ENCODE measurements at regions of chr11 and their contacts with region 1.

Region 1: GRCh38 chr11:134207538-134208239 is 16.1 kb downstream of the NCAPD3 start:
- DNase-seq: peak; percentile 60
- ATAC-seq: no peak
- H3K4me3 ChIP-seq: no peak overlapping the region
- H3K4me3 Mint-ChIP-seq: no peak overlapping the region
- H3K27ac ChIP-seq: no peak overlapping the region
- H3K27ac Mint-ChIP-seq: no peak overlapping the region
- H3K4me1 ChIP-seq: no peaks in the 10 kb centered on the region
- H3K4me1 Mint-ChIP-seq: no peaks in the 10 kb centered on the region
- H3K27me3 ChIP-seq: no peaks in the 10 kb centered on the region
- H3K27me3 Mint-ChIP-seq: no peaks in the 10 kb centered on the region
- CTCF ChIP-seq: peak; percentile 94

Region 2: DNA sequence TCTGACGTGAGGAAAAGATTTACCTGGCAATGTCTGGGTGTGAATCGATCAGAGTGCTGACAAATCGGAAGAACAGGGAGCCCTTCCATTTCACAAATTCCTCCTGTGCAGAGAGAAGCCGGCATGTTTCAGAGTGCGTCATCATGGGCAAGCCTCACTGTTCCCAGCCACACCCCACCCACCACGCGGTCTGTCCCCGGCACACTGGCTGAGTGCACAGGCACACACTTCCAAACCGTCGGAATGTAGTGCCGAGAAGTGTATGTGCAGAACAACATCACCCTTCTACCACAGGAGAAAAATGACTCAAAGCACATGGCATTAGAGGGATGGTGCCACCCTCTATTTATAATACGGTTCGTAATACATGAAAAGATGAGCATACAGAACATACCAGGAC is 31.4 kb before region 1 on chr11:
- CTCF ChIA-PET with region 1: no interaction called
- POLR2A ChIA-PET with region 1: no interaction called
- intact Hi-C with region 1: no loop called
- DNase-seq: no peak
- ATAC-seq: no peak
- H3K4me3 ChIP-seq: no peak overlapping the region
- H3K4me3 Mint-ChIP-seq: no peak overlapping the region
- H3K27ac ChIP-seq: no peak overlapping the region
- H3K27ac Mint-ChIP-seq: no peak overlapping the region
- H3K4me1 ChIP-seq: no peaks in the 10 kb centered on the region
- H3K4me1 Mint-ChIP-seq: no peaks in the 10 kb centered on the region
- H3K27me3 ChIP-seq: no peaks in the 10 kb centered on the region
- H3K27me3 Mint-ChIP-seq: no peaks in the 10 kb centered on the region
- CTCF ChIP-seq: no peak

Region 3: DNA sequence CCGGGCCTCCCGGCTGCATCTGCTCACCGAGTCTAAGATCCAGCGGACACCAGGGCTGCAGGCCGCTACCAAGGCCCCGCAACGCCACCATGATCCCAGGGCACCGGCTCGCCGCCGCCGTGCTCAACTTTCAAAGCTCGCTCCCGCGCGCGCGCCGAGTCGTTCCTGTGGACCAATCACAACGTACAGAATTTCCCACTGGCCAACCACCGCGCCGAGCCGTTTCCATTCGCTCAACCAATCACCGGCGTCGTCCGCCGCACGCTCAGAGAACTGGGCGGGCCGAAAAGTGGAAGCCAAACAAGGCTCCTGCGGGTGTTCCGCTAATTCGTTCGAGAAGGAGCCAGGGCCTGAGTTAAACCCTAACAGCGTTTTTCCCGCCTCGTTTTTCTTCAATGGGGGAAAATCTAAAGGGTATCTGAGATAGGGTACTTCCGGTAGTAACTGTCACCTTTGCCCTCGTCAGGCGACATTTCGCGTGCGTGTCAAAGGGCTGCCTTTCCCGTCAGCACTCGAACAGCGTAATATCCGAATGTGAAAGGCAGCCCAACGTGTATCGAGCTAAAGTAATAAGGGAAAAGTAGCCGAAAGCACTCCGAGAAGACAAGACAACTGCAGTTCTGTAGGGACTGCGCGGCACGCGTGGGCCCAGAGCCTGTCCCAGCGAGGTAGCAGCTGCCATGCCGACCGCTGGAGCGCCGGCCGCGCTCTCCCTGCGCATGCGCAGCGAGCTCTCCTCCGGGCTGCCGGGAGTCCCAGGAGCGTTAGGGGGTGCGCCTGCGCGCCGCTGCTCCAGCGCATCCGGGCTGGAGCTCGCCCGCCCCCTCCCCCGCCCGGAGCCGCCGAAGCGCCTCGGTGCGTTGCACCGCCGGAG is 16.4 kb after region 1 on chr11 and contains the starts of genes NCAPD3 and VPS26B:
- CTCF ChIA-PET with region 1: interaction called, 12 read pairs
- POLR2A ChIA-PET with region 1: interaction called, 9 read pairs
- intact Hi-C with region 1: loop called (anchors 2 kb)
- DNase-seq: peak; percentile 97
- ATAC-seq: peak; percentile 76
- H3K4me3 ChIP-seq: peak within 1 kb of the TSS; percentile 74 to 98 (median 96)
- H3K4me3 Mint-ChIP-seq: peak within 1 kb of the TSS; percentile 96
- H3K27ac ChIP-seq: peak within 1 kb of the TSS; percentile 90 to 91
- H3K27ac Mint-ChIP-seq: peak within 1 kb of the TSS; percentile 97
- H3K4me1 ChIP-seq: peaks cover 34 to 44% of the 10 kb centered on the region in 2 donors
- H3K4me1 Mint-ChIP-seq: peaks cover 47% of the 10 kb centered on the region
- H3K27me3 ChIP-seq: peaks cover 0 to 25% (median 15%) of the 10 kb centered on the region in 4 experiments
- H3K27me3 Mint-ChIP-seq: peaks cover 15% of the 10 kb centered on the region
- CTCF ChIP-seq: no peak
- total RNA-seq, gene NCAPD3: 32.2 and 34.2 TPM in 2 replicates
- total RNA-seq, gene VPS26B: 35.3 and 38.5 TPM in 2 replicates

Region 4: DNA sequence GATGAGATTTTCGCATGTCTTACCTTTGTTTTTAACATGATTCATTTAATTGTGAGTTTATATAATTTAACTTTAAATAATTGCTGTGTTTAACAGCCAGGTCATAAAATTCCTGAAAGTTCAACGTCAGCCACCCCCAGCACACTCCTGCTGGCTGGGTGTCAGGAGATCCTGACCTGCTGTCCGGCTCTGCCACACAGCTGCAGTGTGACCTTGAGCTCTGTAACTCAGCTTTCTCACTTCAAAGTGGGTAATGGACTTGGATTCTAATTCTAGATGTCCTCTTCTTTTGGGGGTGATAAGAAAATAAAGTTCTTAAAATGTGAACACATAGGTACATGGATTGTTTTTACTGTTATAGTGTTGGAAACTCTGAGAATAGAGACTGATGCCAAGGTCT is 27.7 kb after region 1 on chr11:
- CTCF ChIA-PET with region 1: interaction called, 131 read pairs
- POLR2A ChIA-PET with region 1: no interaction called
- intact Hi-C with region 1: no loop called
- DNase-seq: no peak
- ATAC-seq: no peak
- H3K4me3 ChIP-seq: no peak overlapping the region
- H3K4me3 Mint-ChIP-seq: no peak overlapping the region
- H3K27ac ChIP-seq: no peak overlapping the region
- H3K27ac Mint-ChIP-seq: no peak overlapping the region
- H3K4me1 ChIP-seq: peaks cover 22 to 24% of the 10 kb centered on the region in 2 donors
- H3K4me1 Mint-ChIP-seq: peaks cover 19% of the 10 kb centered on the region
- H3K27me3 ChIP-seq: peaks cover 0 to 17% (median 7%) of the 10 kb centered on the region in 4 experiments
- H3K27me3 Mint-ChIP-seq: peaks cover 5% of the 10 kb centered on the region
- CTCF ChIP-seq: no peak

Region 5: GRCh38 chr11:134244655-134245054 is 37.0 kb after region 1 on chr11:
- CTCF ChIA-PET with region 1: interaction called, 131 read pairs
- POLR2A ChIA-PET with region 1: no interaction called
- intact Hi-C with region 1: no loop called
- DNase-seq: peak; percentile 66
- ATAC-seq: peak; percentile 84
- H3K4me3 ChIP-seq: no peak overlapping the region
- H3K4me3 Mint-ChIP-seq: no peak overlapping the region
- H3K27ac ChIP-seq: no peak overlapping the region
- H3K27ac Mint-ChIP-seq: no peak overlapping the region
- H3K4me1 ChIP-seq: no peaks in the 10 kb centered on the region
- H3K4me1 Mint-ChIP-seq: no peaks in the 10 kb centered on the region
- H3K27me3 ChIP-seq: no peaks in the 10 kb centered on the region
- H3K27me3 Mint-ChIP-seq: no peaks in the 10 kb centered on the region
- CTCF ChIP-seq: peak; percentile 77

Region 6: DNA sequence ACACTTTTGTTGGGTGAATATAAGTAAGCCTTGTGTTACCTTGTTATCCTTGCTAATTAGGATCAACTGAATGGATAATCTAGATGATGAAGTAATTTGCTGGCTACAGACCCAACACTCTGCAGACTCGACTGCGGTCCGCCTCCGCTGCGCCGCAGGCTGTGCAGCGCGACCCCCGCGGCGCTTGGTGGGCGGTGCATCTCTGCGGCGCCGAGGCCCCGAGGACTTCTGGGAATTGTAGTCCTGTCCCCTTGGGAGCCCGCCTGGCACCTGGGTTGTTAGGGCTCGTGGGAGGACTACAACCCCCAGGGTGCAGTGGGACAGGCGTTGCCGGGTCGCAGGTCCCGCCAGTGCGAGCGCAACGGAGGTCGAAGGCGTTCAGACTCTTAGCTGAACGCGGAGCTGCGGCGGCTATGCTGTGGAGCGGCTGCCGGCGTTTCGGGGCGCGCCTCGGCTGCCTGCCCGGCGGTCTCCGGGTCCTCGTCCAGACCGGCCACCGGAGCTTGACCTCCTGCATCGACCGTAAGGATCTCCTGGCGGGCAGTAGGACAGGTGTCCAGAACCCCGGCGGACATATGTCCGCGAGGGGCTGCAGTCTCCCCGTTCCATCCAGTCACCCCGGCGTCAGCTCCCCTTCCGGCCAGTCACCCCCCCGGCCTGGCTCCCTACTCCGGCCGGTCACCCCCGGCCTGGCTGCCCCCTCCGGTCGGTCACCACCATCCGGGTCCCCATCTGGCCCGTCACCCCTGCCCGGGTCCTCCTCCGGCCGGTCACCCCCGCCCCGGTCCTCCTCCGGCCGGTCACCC is 45.7 kb after region 1 on chr11 and contains the starts of genes ACAD8 and THYN1:
- CTCF ChIA-PET with region 1: interaction called, 11 read pairs
- POLR2A ChIA-PET with region 1: no interaction called
- intact Hi-C with region 1: loop called (anchors 2 kb)
- DNase-seq: peak; percentile 96
- ATAC-seq: peak; percentile 100
- H3K4me3 ChIP-seq: peak within 1 kb of the TSS; percentile 81 to 100 (median 93)
- H3K4me3 Mint-ChIP-seq: peak within 1 kb of the TSS; percentile 91
- H3K27ac ChIP-seq: peak within 1 kb of the TSS; percentile 42 to 45
- H3K27ac Mint-ChIP-seq: peak within 1 kb of the TSS; percentile 69
- H3K4me1 ChIP-seq: peaks cover 10 to 15% of the 10 kb centered on the region in 2 donors
- H3K4me1 Mint-ChIP-seq: peaks cover 28% of the 10 kb centered on the region
- H3K27me3 ChIP-seq: no peaks in the 10 kb centered on the region
- H3K27me3 Mint-ChIP-seq: no peaks in the 10 kb centered on the region
- CTCF ChIP-seq: peak; percentile 40
- total RNA-seq, gene ACAD8: 33.6 and 35.6 TPM in 2 replicates
- total RNA-seq, gene THYN1: 35.7 and 38.4 TPM in 2 replicates

Region 7: DNA sequence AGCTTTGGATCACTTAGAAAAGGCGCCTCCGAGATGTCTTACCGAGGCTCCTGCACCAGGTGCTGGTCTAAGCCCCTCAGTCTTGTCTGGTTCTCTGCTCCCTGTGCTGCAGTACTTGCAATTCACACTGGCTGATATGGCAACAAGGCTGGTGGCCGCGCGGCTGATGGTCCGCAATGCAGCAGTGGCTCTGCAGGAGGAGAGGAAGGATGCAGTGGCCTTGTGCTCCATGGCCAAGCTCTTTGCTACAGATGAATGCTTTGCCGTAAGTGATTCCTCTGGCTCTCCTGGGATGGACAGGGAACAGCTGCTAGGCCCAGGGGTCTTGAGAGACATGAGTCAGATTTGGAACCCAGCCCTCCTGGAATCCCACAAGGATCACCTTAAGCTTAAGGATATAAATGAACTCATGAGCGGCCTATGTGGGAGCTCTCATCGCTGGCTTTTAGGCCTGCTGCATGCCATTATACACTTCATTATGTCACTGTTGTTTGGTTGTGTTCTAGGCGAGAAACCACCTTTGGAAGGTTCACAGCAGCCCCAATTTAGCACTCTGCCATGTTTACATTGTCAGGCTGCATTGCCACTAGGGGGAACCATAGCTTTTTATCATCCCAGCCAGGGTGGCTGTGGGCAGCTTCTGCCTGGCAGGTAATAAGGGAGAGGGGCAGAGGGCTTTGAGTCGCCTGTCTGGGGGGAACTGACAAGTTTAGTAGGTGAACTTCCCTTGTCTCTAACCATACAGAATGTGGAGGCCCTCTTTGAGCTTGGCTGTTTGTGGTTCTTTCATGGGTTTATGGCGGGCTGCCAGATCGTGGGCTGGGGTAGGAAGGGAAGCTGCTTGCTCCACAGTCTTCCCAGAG is 54.2 kb after region 1 on chr11:
- CTCF ChIA-PET with region 1: interaction called, 10 read pairs
- POLR2A ChIA-PET with region 1: no interaction called
- intact Hi-C with region 1: no loop called
- DNase-seq: no peak
- ATAC-seq: no peak
- H3K4me3 ChIP-seq: no peak overlapping the region
- H3K4me3 Mint-ChIP-seq: no peak overlapping the region
- H3K27ac ChIP-seq: no peak overlapping the region
- H3K27ac Mint-ChIP-seq: no peak overlapping the region
- H3K4me1 ChIP-seq: no peaks in the 10 kb centered on the region
- H3K4me1 Mint-ChIP-seq: no peaks in the 10 kb centered on the region
- H3K27me3 ChIP-seq: no peaks in the 10 kb centered on the region
- H3K27me3 Mint-ChIP-seq: no peaks in the 10 kb centered on the region
- CTCF ChIP-seq: peak; percentile 21